ENCODE measurements at regions of chr5 and their contacts with region 1.

Region 1: GRCh38 chr5:99019812-99020697 is 91.2 kb upstream of the CHD1 start:
- DNase-seq: no peak

Region 2: GRCh38 chr5:98604721-98605425 is 415.2 kb before region 1 on chr5:
- intact Hi-C with region 1: no loop called
- DNase-seq: no peak

Region 3: GRCh38 chr5:98963019-98963418 is 57.0 kb before region 1 on chr5:
- intact Hi-C with region 1: loop called in 1 of 2 experiments (anchors 5 kb)
- DNase-seq: no peak

Measured in posterior vena cava (tissue), 2 donors.